H1 (cell line): ENCODE measurements at regions of chr13 and their contacts with region 1.

Region 1: GRCh38 chr13:99436686-99437416 is 64.4 kb upstream of the TM9SF2 start:
- DNase-seq: peak; percentile 68 to 97
- H3K4me3 ChIP-seq: no peak overlapping the region
- H3K27ac ChIP-seq: no peak overlapping the region
- H3K4me1 ChIP-seq: peaks cover 8 to 26% (median 13%) of the 10 kb centered on the region in 4 experiments
- H3K27me3 ChIP-seq: no peaks in the 10 kb centered on the region
- CTCF ChIP-seq: peak; percentile 98 to 100 (median 99)
- EP300 ChIP-seq: 0 out of 3 replicates have a peak, but pooled peaks of 1 of the 2 experiments have one; percentile 10
- POLR2A ChIP-seq: no peak
- RAD21 ChIP-seq: peak; percentile 78 to 90

Region 2: GRCh38 chr13:99176309-99177276 is 260.3 kb before region 1 on chr13:
- CTCF ChIA-PET with region 1: interaction called, 46 read pairs
- POLR2A ChIA-PET with region 1: no interaction called
- DNase-seq: peak; percentile 64 to 94
- H3K4me3 ChIP-seq: no peak overlapping the region
- H3K27ac ChIP-seq: no peak overlapping the region
- H3K4me1 ChIP-seq: no peaks in the 10 kb centered on the region
- H3K27me3 ChIP-seq: no peaks in the 10 kb centered on the region
- CTCF ChIP-seq: peak; percentile 96 to 97 (median 97)
- EP300 ChIP-seq: no peak
- POLR2A ChIP-seq: no peak
- RAD21 ChIP-seq: peak; percentile 98

Region 3: GRCh38 chr13:99302637-99303505 is 134.0 kb before region 1 on chr13:
- CTCF ChIA-PET with region 1: no interaction called
- POLR2A ChIA-PET with region 1: no interaction called
- DNase-seq: no peak
- H3K4me3 ChIP-seq: no peak overlapping the region
- H3K27ac ChIP-seq: no peak overlapping the region
- H3K4me1 ChIP-seq: no peaks in the 10 kb centered on the region; a peak in 1 of 7 replicates
- H3K27me3 ChIP-seq: no peaks in the 10 kb centered on the region
- CTCF ChIP-seq: no peak
- EP300 ChIP-seq: no peak
- POLR2A ChIP-seq: no peak
- RAD21 ChIP-seq: no peak

Region 4: GRCh38 chr13:99374994-99375737 is 61.7 kb before region 1 on chr13:
- CTCF ChIA-PET with region 1: interaction called, 24 read pairs
- POLR2A ChIA-PET with region 1: no interaction called
- DNase-seq: peak in 1 of 2 experiments; percentile 43
- H3K4me3 ChIP-seq: no peak overlapping the region
- H3K27ac ChIP-seq: no peak overlapping the region
- H3K4me1 ChIP-seq: peaks cover 0 to 16% (median 2%) of the 10 kb centered on the region in 4 experiments; a peak in 6 of 7 replicates
- H3K27me3 ChIP-seq: no peaks in the 10 kb centered on the region
- CTCF ChIP-seq: no peak
- EP300 ChIP-seq: no peak
- POLR2A ChIP-seq: no peak
- RAD21 ChIP-seq: no peak

Region 5: DNA sequence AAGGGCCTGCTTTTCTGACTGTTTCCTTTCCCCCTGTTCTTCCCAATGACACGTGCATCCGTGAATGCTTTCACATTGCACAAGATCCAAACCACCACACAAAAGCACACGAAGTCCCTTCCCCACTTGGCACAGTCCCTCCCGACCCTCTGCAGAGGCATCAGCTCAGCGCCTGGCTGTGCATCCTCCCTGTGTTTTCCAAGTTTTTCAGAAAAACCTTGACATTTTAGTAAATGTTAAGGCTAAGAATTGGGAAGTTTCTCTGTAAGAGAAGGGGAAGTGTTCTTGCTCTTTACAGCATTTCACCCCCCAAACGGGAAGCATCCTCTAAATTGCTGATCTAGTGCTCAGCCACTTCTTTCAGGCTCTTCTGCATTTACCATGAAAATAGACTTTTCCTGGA is 30.1 kb before region 1 on chr13:
- CTCF ChIA-PET with region 1: interaction called, 47 read pairs
- POLR2A ChIA-PET with region 1: no interaction called
- DNase-seq: no peak
- H3K4me3 ChIP-seq: no peak overlapping the region
- H3K27ac ChIP-seq: no peak overlapping the region
- H3K4me1 ChIP-seq: no peaks in the 10 kb centered on the region; a peak in 1 of 7 replicates
- H3K27me3 ChIP-seq: peaks cover 0 to 2% (median 0%) of the 10 kb centered on the region in 4 experiments; a peak in 2 of 7 replicates
- CTCF ChIP-seq: no peak
- EP300 ChIP-seq: no peak
- POLR2A ChIP-seq: no peak
- RAD21 ChIP-seq: no peak

Region 6: GRCh38 chr13:99425485-99426341 is 11.1 kb before region 1 on chr13:
- CTCF ChIA-PET with region 1: interaction called, 64 read pairs
- POLR2A ChIA-PET with region 1: interaction called, 3 read pairs
- DNase-seq: no peak
- H3K4me3 ChIP-seq: no peak overlapping the region
- H3K27ac ChIP-seq: 0 out of 2 replicates have a peak overlapping the region, but pooled peaks have one; percentile 4
- H3K4me1 ChIP-seq: no peaks in the 10 kb centered on the region; a peak in 1 of 7 replicates
- H3K27me3 ChIP-seq: no peaks in the 10 kb centered on the region
- CTCF ChIP-seq: no peak
- EP300 ChIP-seq: no peak
- POLR2A ChIP-seq: no peak
- RAD21 ChIP-seq: no peak

Region 7: DNA sequence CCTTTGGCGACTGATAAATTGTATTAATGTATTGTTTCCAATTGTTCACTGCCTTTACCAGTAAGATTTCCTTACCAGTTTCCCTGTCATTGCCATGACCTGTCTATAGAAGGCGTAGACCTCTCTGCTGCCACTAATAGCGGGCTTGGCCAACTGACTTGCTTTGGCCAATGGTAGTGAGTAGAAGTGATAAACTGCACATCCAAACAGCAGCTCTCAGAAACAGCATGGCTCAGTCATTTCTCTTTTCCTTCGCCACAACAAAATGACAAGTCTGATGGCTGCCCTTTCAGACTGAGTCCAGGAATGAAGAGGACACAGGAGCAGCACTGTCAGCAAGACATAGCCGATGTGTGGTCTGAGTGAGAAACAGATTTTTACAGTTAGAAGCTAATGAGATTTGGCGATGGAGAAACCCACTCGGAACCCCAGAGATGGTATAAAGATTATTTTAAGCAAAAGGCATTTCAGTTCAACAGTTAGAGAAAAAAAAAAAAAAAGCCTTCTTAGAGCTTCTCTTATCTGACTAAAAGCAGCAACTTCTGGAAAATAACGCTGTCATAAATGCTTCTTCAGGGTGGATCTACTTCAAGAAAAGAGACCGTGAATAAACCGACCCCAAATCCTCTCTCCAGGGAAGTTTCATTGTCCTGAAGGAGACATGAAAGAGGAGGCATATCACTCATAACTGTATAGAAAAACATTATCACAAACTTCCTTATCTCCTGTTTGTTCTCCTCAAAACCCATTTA is 22.4 kb after region 1 on chr13:
- CTCF ChIA-PET with region 1: interaction called, 22 read pairs
- POLR2A ChIA-PET with region 1: no interaction called
- DNase-seq: no peak
- H3K4me3 ChIP-seq: no peak overlapping the region
- H3K27ac ChIP-seq: no peak overlapping the region
- H3K4me1 ChIP-seq: no peaks in the 10 kb centered on the region
- H3K27me3 ChIP-seq: no peaks in the 10 kb centered on the region
- CTCF ChIP-seq: peak in 1 of 3 experiments; percentile 23; a peak in 1 of 4 replicates
- EP300 ChIP-seq: no peak
- POLR2A ChIP-seq: no peak
- RAD21 ChIP-seq: peak in 1 of 2 experiments; percentile 22; a peak in 1 of 4 replicates

Region 8: DNA sequence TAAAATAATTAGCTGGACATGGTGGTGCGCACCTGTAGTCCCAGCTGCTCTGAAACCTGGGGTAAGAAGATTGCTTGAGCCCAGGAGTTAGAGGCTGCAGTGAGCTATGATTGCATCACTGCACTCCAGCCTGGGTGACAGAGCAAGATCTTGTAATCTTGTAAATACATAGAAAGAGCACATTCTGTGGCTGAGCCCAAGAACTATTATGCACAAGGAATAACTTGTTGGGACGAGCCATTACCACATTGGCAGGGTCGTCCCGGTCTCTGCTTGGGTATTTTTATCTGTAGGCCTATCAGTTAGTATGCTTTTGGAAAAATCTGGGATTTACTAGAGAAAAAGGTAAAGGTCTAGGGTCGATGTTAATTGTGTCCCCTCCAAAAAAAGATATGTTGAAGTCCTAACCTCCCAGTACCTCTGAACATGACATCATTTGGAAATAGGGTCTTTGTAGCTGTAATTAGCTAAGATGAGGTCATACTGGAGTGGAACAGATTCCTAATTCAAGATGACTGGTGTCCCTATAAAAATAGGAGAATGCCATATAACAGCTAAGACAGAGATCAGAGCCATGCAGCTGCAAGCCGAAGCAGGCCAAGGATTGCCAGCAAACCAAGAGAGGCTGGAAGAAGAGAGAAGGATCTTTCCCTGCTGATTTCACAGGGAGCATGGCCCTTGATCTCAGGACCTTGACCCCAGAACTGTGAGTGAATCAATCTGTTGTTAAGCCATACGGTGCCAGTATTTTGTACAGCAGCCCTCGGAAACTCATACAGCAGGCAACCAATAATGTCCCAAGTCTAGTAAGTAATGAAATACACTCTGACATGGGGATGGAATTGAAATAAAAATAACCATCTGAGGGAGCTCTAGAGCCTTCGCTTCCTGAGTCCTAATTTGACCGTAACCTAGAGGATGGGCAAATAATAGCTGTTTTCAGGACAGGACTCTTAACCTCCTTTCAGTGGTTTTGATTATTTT is 141.4 kb after region 1 on chr13:
- CTCF ChIA-PET with region 1: interaction called, 13 read pairs
- POLR2A ChIA-PET with region 1: no interaction called
- DNase-seq: no peak
- H3K4me3 ChIP-seq: no peak overlapping the region
- H3K27ac ChIP-seq: no peak overlapping the region
- H3K4me1 ChIP-seq: no peaks in the 10 kb centered on the region; a peak in 1 of 7 replicates
- H3K27me3 ChIP-seq: no peaks in the 10 kb centered on the region
- CTCF ChIP-seq: peak in 2 of 3 experiments; percentile 25 to 31; a peak in 2 of 4 replicates
- EP300 ChIP-seq: no peak
- POLR2A ChIP-seq: no peak
- RAD21 ChIP-seq: peak; percentile 40 to 52

Region 9: GRCh38 chr13:99821741-99822140 is 384.9 kb after region 1 on chr13:
- CTCF ChIA-PET with region 1: no interaction called
- POLR2A ChIA-PET with region 1: no interaction called
- DNase-seq: no peak
- H3K4me3 ChIP-seq: no peak overlapping the region
- H3K27ac ChIP-seq: no peak overlapping the region
- H3K4me1 ChIP-seq: peaks cover 0 to 13% (median 10%) of the 10 kb centered on the region in 4 experiments; a peak in 5 of 7 replicates
- H3K27me3 ChIP-seq: no peaks in the 10 kb centered on the region
- CTCF ChIP-seq: no peak
- EP300 ChIP-seq: no peak
- POLR2A ChIP-seq: no peak
- RAD21 ChIP-seq: no peak